Activated CD4-positive, alpha-beta T cell treated with anti-CD3 and anti-CD28 coated beads for 36 hours (primary cell): ENCODE measurements at regions of chr2 and their contacts with region 1.

Region 1: GRCh38 chr2:170873035-170873692 is 55.9 kb upstream of the GORASP2 start:
- DNase-seq: peak; percentile 89
- ATAC-seq: peak; percentile 99
- H3K4me3 Mint-ChIP-seq: peak overlapping the region; percentile 40
- H3K27ac Mint-ChIP-seq: peak overlapping the region; percentile 17
- H3K4me1 Mint-ChIP-seq: peaks cover 13% of the 10 kb centered on the region
- H3K27me3 Mint-ChIP-seq: no peaks in the 10 kb centered on the region

Region 2: DNA sequence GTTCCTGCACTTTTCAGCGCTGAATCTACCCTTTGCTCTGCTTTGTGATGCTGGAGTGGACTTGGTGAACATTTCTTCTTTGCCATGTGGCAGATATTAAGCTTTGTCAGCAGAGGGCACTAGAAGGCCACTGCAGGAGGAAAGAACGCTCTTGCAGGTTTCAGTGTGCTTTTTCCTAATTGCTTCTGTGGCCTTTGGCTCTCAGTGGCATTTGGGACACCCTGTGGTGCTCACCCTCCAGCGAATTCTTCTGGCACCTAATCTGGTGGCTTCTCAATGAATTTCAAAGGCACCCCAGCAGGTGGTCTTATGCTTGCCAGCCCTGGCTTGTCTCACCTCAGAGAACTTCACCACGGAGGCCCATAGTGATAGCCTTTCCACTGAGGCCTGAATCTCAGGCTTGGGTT is 548.5 kb before region 1 on chr2:
- CTCF ChIA-PET with region 1: interaction called, 6 read pairs
- POLR2A ChIA-PET with region 1: no interaction called
- intact Hi-C with region 1: loop called in 1 of 2 experiments (anchors 2 kb)
- DNase-seq: peak; percentile 63
- ATAC-seq: peak; percentile 36
- H3K4me3 Mint-ChIP-seq: no peak overlapping the region
- H3K27ac Mint-ChIP-seq: no peak overlapping the region
- H3K4me1 Mint-ChIP-seq: no peaks in the 10 kb centered on the region
- H3K27me3 Mint-ChIP-seq: peaks cover 4% of the 10 kb centered on the region

Region 3: GRCh38 chr2:170369894-170370293 is 503.3 kb before region 1 on chr2:
- CTCF ChIA-PET with region 1: interaction called, 13 read pairs
- POLR2A ChIA-PET with region 1: no interaction called
- intact Hi-C with region 1: loop called in 1 of 2 experiments (anchors 1 kb)
- DNase-seq: no peak
- ATAC-seq: no peak
- H3K4me3 Mint-ChIP-seq: no peak overlapping the region
- H3K27ac Mint-ChIP-seq: no peak overlapping the region
- H3K4me1 Mint-ChIP-seq: peaks cover 42% of the 10 kb centered on the region
- H3K27me3 Mint-ChIP-seq: peaks cover 28% of the 10 kb centered on the region

Region 4: DNA sequence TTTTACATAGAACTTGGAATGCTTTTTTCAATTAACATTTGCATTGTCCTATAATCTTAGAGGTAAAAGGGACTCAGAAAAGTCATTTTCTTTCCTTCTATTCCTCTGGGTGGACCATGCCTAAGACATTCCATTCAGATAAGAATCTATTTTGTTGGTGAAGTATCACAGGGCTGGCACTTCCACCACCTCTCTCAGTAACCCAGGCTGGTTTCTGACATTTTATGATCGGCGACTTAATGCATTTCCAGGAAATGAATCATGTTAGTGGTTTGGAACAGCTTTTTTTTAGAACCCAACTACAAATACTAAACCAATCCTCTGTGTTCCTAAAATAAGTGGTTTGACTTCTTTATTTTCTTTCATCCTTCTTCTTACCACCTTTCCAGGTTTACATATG is 29.5 kb before region 1 on chr2:
- CTCF ChIA-PET with region 1: interaction called, 21 read pairs
- POLR2A ChIA-PET with region 1: no interaction called
- intact Hi-C with region 1: loop called in 1 of 2 experiments (anchors 2 kb)
- DNase-seq: peak; percentile 24
- ATAC-seq: peak; percentile 63
- H3K4me3 Mint-ChIP-seq: no peak overlapping the region
- H3K27ac Mint-ChIP-seq: no peak overlapping the region
- H3K4me1 Mint-ChIP-seq: peaks cover 17% of the 10 kb centered on the region
- H3K27me3 Mint-ChIP-seq: no peaks in the 10 kb centered on the region

Region 5: GRCh38 chr2:170886386-170886785 is 13.2 kb after region 1 on chr2:
- CTCF ChIA-PET with region 1: interaction called, 26 read pairs
- POLR2A ChIA-PET with region 1: no interaction called
- intact Hi-C with region 1: no loop called
- DNase-seq: no peak
- ATAC-seq: no peak
- H3K4me3 Mint-ChIP-seq: no peak overlapping the region
- H3K27ac Mint-ChIP-seq: no peak overlapping the region
- H3K4me1 Mint-ChIP-seq: no peaks in the 10 kb centered on the region
- H3K27me3 Mint-ChIP-seq: peaks cover 10% of the 10 kb centered on the region